Activated naive CD4-positive, alpha-beta T cell treated with anti-CD3 and anti-CD28 coated beads for 36 hours (primary cell): ENCODE measurements at regions of chr4 and their contacts with region 1.

Region 1: DNA sequence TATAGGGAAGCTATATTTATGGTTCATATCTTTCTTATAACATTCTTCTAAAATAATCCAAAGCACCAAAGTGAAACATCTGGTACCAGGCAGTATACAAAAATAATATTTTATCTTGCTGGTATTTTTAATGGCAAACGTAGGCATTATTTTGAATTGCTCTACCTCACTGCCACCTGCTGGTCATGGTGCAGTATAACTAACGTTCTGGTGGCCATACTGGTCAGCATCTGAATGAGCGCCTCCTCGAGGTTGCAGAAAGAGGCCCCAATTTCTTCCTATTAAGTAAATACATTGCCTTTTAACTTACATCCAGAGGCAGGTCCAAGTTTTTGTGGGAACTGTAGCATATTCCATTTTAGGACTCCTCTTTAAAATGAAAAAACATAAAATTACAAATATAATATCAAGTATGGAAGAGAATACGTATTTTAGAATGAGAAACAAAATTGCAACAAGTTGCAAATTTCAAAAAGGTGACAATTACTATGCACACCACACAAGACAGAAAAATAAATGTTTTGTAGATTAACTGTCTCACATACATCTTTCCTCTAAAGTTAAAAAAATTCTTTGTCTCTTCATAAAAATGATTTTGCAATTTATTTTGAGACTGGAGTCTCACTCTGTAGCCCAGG is 22.9 kb upstream of the CWH43 start:
- DNase-seq: peak; percentile 89
- H3K4me3 Mint-ChIP-seq: no peak overlapping the region
- H3K27ac Mint-ChIP-seq: no peak overlapping the region
- H3K4me1 Mint-ChIP-seq: no peaks in the 10 kb centered on the region
- H3K27me3 Mint-ChIP-seq: no peaks in the 10 kb centered on the region

Region 2: GRCh38 chr4:48315728-48316630 is 647.2 kb before region 1 on chr4:
- CTCF ChIA-PET with region 1: no interaction called
- intact Hi-C with region 1: loop called (anchors 1 kb)
- DNase-seq: peak; percentile 52
- H3K4me3 Mint-ChIP-seq: no peak overlapping the region
- H3K27ac Mint-ChIP-seq: no peak overlapping the region
- H3K4me1 Mint-ChIP-seq: peaks cover 3% of the 10 kb centered on the region
- H3K27me3 Mint-ChIP-seq: no peaks in the 10 kb centered on the region

Region 3: GRCh38 chr4:48445704-48446103 is 517.5 kb before region 1 on chr4:
- CTCF ChIA-PET with region 1: interaction called, 5 read pairs
- intact Hi-C with region 1: loop called (anchors 1 kb)
- DNase-seq: no peak
- H3K4me3 Mint-ChIP-seq: no peak overlapping the region
- H3K27ac Mint-ChIP-seq: no peak overlapping the region
- H3K4me1 Mint-ChIP-seq: no peaks in the 10 kb centered on the region
- H3K27me3 Mint-ChIP-seq: peaks cover 3% of the 10 kb centered on the region

Region 4: DNA sequence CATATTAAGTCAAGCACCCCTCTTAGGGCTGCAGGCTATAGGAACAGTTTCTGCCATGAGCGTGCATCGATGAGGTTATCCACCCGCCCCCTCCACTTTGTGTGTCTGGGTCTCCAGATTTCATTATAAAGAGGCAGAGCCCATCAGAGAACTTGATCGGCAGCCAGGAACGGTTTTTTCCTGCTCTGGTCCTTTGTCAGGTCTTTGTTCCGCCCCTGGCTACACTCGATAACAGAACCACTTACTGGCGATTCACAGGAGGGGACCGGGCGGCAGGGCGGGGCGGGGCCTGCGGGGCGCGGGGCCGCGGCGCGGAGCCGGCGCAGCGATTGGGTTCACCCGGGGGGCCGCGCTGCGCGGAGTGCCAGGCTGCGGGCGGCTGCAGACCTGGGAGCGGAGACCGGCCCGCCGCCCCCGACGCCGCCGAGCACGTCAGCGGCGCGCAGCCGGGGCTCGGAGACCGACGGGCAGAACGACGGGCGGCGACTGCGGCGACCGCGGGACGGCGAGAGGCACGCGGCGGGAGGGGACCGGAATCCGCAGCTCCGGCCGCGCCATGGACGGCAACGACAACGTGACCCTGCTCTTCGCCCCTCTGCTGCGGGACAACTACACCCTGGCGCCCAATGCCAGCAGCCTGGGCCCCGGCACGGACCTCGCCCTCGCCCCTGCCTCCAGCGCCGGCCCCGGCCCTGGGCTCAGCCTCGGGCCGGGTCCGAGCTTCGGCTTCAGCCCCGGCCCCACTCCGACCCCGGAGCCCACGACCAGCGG is 480.0 kb before region 1 on chr4 and contains the start of gene SLC10A4:
- CTCF ChIA-PET with region 1: no interaction called
- intact Hi-C with region 1: loop called (anchors 2 kb)
- DNase-seq: no peak
- H3K4me3 Mint-ChIP-seq: peak within 1 kb of the TSS; percentile 57
- H3K27ac Mint-ChIP-seq: no peak within 1 kb of the TSS
- H3K4me1 Mint-ChIP-seq: peaks cover 11% of the 10 kb centered on the region
- H3K27me3 Mint-ChIP-seq: peaks cover 63% of the 10 kb centered on the region
- total RNA-seq, gene SLC10A4: not detected

Region 5: GRCh38 chr4:48578132-48578968 is 384.8 kb before region 1 on chr4:
- CTCF ChIA-PET with region 1: interaction called, 26 read pairs
- intact Hi-C with region 1: loop called (anchors 1 kb)
- DNase-seq: peak; percentile 72
- H3K4me3 Mint-ChIP-seq: no peak overlapping the region
- H3K27ac Mint-ChIP-seq: no peak overlapping the region
- H3K4me1 Mint-ChIP-seq: peaks cover 7% of the 10 kb centered on the region
- H3K27me3 Mint-ChIP-seq: no peaks in the 10 kb centered on the region

Region 6: GRCh38 chr4:48877827-48878533 is 85.2 kb before region 1 on chr4:
- CTCF ChIA-PET with region 1: no interaction called
- intact Hi-C with region 1: loop called (anchors 1 kb)
- DNase-seq: peak; percentile 8
- H3K4me3 Mint-ChIP-seq: no peak overlapping the region
- H3K27ac Mint-ChIP-seq: no peak overlapping the region
- H3K4me1 Mint-ChIP-seq: no peaks in the 10 kb centered on the region
- H3K27me3 Mint-ChIP-seq: no peaks in the 10 kb centered on the region

Region 7: DNA sequence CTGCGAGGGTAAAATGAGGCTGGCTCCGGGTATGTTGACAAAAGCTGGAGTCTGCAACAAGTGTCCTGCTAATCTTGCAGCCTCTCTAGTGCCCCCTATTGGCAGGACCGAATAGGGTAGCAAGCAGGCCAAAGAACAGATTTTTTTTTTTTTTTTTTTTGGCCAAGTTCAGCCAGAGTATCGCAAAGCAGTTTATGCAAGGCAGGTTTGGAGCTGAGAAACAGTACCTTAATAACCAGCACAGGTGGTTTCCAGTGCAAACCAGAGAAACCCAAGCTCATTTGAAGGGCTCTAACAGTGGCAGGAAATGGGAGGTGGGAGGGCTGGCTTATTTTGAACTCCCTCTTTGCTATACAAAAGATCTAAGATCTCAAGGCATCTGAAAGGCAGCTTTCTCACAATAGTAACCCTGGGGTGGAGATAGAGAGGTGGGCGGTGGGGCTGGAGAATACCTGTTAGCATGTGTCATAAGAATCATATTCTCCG is 18.4 kb before region 1 on chr4:
- CTCF ChIA-PET with region 1: interaction called, 17 read pairs
- intact Hi-C with region 1: no loop called
- DNase-seq: peak; percentile 81
- H3K4me3 Mint-ChIP-seq: no peak overlapping the region
- H3K27ac Mint-ChIP-seq: no peak overlapping the region
- H3K4me1 Mint-ChIP-seq: peaks cover 22% of the 10 kb centered on the region
- H3K27me3 Mint-ChIP-seq: no peaks in the 10 kb centered on the region